Activated T-helper 2 cell treated with anti-CD3 and anti-CD28 coated beads, Interferon-gamma antibody, Interleukin-2, Interleukin-4, amounts not matched to agents 10 μg/mL and 5 μg/mL and 100 μg/mL, durations not matched to agents 14 hours and 24 hours and 36 hours (primary cell): ENCODE measurements at regions of chr5 and their contacts with region 1.

Region 1: GRCh38 chr5:139560752-139561654 is at the start of gene UBE2D2:
- DNase-seq: peak; percentile 96
- H3K4me3 Mint-ChIP-seq: peak within 1 kb of the TSS; percentile 93
- H3K27ac Mint-ChIP-seq: peak within 1 kb of the TSS; percentile 98
- H3K4me1 Mint-ChIP-seq: peaks cover 32% of the 10 kb centered on the region
- H3K27me3 Mint-ChIP-seq: no peaks in the 10 kb centered on the region
- total RNA-seq, gene UBE2D2: 249 and 262 TPM in 2 replicates

Region 2: GRCh38 chr5:138178516-138179276 is 1382.3 kb before region 1 on chr5 and contains the starts of genes BRD8 and KIF20A:
- intact Hi-C with region 1: loop called (anchors 5 kb)
- DNase-seq: peak; percentile 89
- H3K4me3 Mint-ChIP-seq: no peak within 1 kb of the TSS
- H3K27ac Mint-ChIP-seq: peak within 1 kb of the TSS; percentile 17
- H3K4me1 Mint-ChIP-seq: peaks cover 14% of the 10 kb centered on the region
- H3K27me3 Mint-ChIP-seq: no peaks in the 10 kb centered on the region
- total RNA-seq, gene BRD8: 45.4 and 48.4 TPM in 2 replicates
- total RNA-seq, gene KIF20A: 28.1 and 30.3 TPM in 2 replicates

Region 3: GRCh38 chr5:139403787-139404483 is 157.1 kb before region 1 on chr5 and contains the start of gene SPATA24:
- intact Hi-C with region 1: loop called (anchors 1 kb)
- DNase-seq: peak; percentile 98
- H3K4me3 Mint-ChIP-seq: peak within 1 kb of the TSS; percentile 92
- H3K27ac Mint-ChIP-seq: peak within 1 kb of the TSS; percentile 100
- H3K4me1 Mint-ChIP-seq: peaks cover 31% of the 10 kb centered on the region
- H3K27me3 Mint-ChIP-seq: no peaks in the 10 kb centered on the region
- total RNA-seq, gene SPATA24: 4.7 and 4.8 TPM in 2 replicates

Region 4: GRCh38 chr5:139439013-139439903 is 121.7 kb before region 1 on chr5 and contains the start of gene DNAJC18:
- intact Hi-C with region 1: loop called (anchors 1 kb)
- DNase-seq: peak; percentile 84
- H3K4me3 Mint-ChIP-seq: peak within 1 kb of the TSS; percentile 93
- H3K27ac Mint-ChIP-seq: peak within 1 kb of the TSS; percentile 98
- H3K4me1 Mint-ChIP-seq: peaks cover 58% of the 10 kb centered on the region
- H3K27me3 Mint-ChIP-seq: no peaks in the 10 kb centered on the region
- total RNA-seq, gene DNAJC18: 29.8 and 35.8 TPM in 2 replicates

Region 5: GRCh38 chr5:139517683-139518564 is 43.1 kb before region 1 on chr5:
- intact Hi-C with region 1: loop called (anchors 2 kb)
- DNase-seq: peak; percentile 85
- H3K4me3 Mint-ChIP-seq: peak overlapping the region; percentile 79
- H3K27ac Mint-ChIP-seq: peak overlapping the region; percentile 88
- H3K4me1 Mint-ChIP-seq: peaks cover 23% of the 10 kb centered on the region
- H3K27me3 Mint-ChIP-seq: no peaks in the 10 kb centered on the region

Region 6: DNA sequence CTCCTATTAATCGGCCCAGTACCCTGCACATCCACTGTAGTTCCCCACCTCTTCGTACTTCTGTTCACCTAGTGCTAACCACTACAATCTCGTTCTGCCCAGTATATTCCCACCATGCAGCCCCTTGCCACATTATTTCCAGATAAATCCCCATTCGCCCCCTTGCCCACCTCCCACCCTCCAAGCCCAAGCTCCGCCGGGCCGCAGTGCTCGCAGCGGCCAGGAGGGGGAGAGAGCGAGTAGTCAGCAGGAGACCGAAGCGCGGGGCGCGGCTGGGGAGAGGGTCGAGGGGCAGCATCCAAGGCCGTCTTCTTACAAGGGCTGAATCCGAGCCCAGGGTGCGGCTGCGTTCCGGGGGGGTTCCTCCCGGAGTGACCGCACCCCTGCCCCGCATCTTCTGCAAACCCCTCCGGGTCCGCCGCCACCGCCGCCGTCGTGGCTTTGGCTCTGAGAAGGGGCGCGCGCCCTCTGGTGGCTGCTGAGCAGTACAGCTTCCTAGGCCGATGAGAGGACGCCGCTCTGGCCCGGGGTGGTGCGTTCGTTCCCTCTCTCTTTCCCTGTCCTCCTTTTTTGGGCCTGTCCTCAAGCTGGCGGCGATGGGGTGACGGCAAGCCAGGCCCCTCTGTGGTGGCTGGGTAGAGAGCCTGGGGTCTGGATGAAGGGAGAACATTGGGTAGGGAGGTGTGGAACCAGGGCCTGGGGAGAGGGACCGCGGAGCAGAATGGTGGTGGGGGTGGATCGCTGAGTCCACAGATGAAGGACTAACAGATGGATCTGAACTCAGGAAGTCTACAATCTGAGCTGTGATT is 204.6 kb after region 1 on chr5:
- intact Hi-C with region 1: loop called (anchors 10 kb)
- DNase-seq: peak; percentile 68
- H3K4me3 Mint-ChIP-seq: peak overlapping the region; percentile 56
- H3K27ac Mint-ChIP-seq: no peak overlapping the region
- H3K4me1 Mint-ChIP-seq: peaks cover 8% of the 10 kb centered on the region
- H3K27me3 Mint-ChIP-seq: peaks cover 39% of the 10 kb centered on the region

Region 7: GRCh38 chr5:140401362-140402257 is 840.6 kb after region 1 on chr5 and contains the start of gene ANKHD1:
- intact Hi-C with region 1: loop called (anchors 5 kb)
- DNase-seq: peak; percentile 97
- H3K4me3 Mint-ChIP-seq: no peak within 1 kb of the TSS
- H3K27ac Mint-ChIP-seq: no peak within 1 kb of the TSS
- H3K4me1 Mint-ChIP-seq: peaks cover 20% of the 10 kb centered on the region
- H3K27me3 Mint-ChIP-seq: no peaks in the 10 kb centered on the region
- total RNA-seq, gene ANKHD1: 119 and 120 TPM in 2 replicates